Activated CD4-positive, alpha-beta memory T cell treated with anti-CD3 and anti-CD28 coated beads, Interleukin-2, amount 10 ng/mL, durations not matched to agents 7 days and 5 days (primary cell): ENCODE measurements at regions of chr1 and their contacts with region 1.

Region 1: GRCh38 chr1:156728597-156729462 is at the start of gene ISG20L2:
- DNase-seq: peak; percentile 98
- H3K4me3 Mint-ChIP-seq: no peak within 1 kb of the TSS
- H3K27ac Mint-ChIP-seq: no peak within 1 kb of the TSS
- H3K4me1 Mint-ChIP-seq: peaks cover 24% of the 10 kb centered on the region
- H3K27me3 Mint-ChIP-seq: no peaks in the 10 kb centered on the region
- total RNA-seq, gene ISG20L2: 42.0 to 43.3 TPM

Region 2: DNA sequence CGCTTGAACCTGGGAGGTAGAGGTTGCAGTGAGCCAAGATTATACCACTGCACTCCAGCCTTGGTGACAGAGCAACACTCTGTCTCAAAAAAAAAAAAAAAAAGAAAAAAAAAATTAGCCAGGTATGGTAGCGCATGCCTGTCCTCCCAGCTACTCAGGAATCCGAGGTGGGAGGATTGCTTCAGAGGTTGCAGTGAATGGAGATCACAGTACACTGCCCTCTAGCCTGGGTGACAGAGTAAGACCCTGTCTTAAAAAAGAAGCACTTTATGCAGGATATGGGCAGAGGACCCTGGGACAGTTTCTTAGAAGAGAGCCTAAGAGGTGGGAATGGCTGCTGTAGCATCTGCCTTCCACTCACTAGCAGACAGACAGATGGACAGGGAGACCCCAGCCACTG is 179.4 kb before region 1 on chr1:
- CTCF ChIA-PET with region 1: no interaction called
- POLR2A ChIA-PET with region 1: no interaction called
- DNase-seq: no peak
- H3K4me3 Mint-ChIP-seq: no peak overlapping the region
- H3K27ac Mint-ChIP-seq: no peak overlapping the region
- H3K4me1 Mint-ChIP-seq: peaks cover 7% of the 10 kb centered on the region
- H3K27me3 Mint-ChIP-seq: no peaks in the 10 kb centered on the region

Region 3: DNA sequence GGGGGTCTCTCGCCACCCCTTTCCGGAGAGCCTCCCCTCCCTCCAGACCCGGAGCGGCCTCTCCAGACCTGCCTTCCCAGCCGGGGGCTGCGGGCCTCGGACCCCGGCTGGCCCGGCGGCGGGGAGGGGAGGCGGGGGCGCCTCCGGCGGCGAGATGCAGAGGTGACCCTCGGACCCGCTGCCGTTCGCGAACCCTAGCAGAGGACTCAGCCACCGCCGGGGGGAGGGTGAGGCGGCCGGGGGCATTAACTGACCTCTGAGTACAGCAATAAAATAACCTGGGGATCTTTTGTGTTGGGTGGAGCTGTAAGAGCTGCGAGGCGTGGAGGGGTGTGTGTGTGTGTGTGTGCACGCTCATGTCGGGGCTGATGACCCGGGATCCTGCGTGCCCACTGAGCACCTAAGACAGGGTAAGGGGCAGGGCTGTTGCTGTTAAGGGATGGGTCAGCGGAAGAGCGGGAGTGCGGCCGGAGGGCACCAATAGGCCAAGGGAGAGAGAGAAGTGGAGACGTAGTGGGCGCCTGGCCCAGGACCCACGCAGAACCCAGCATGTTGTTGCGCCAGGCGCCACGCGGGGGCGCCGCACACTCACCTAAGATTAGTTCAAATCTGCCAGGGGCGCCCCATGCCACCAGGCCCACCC is 103.3 kb before region 1 on chr1:
- CTCF ChIA-PET with region 1: interaction called, 14 read pairs
- POLR2A ChIA-PET with region 1: interaction called, 3 read pairs
- DNase-seq: peak; percentile 62
- H3K4me3 Mint-ChIP-seq: peak overlapping the region; percentile 35
- H3K27ac Mint-ChIP-seq: no peak overlapping the region
- H3K4me1 Mint-ChIP-seq: peaks cover 12% of the 10 kb centered on the region
- H3K27me3 Mint-ChIP-seq: peaks cover 64% of the 10 kb centered on the region

Region 4: DNA sequence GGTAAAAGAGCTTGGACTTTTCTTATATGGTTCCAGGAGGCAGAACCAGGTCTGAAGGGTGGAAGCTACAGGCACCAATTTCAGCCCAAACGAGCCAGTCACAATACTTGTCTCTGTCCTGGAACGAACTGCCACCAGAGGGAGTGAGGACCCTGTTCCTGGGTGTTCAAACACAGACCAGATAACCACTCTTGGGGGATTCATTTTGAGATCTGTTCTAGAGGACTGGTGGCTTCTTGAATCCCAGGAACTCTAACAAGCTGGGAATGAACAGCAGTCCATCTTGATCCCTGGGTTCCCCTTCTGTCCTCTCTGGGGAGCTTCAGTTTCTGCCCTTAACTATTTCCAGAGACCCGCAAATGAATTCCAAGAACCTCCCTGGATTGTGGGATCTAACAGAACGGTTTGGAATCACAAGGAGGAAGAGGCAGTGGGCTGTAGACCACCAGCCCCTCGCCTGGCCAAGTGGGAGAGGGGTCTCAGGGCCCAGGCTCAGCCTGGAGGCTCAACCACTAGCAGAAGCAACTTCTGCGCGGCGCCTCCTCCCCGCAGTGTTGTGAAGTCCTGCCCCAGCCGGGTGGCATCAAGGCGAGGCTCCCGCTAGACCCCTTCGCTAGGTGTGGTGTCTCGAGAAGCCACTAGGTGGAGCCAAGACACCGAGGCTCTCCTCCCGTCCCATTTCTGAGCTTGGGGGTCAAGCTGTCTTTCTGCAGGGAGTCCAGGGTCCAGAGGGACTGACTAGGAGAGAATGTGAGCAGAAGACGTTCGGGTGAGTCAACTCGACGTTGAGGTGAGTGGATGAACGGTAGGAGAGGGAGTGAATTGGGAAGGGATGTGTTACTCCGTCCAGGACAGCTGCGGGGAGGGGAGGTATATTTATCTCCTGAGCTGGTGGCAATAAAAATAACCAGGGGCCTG is 39.5 kb before region 1 on chr1:
- CTCF ChIA-PET with region 1: interaction called, 212 read pairs
- POLR2A ChIA-PET with region 1: interaction called, 32 read pairs
- DNase-seq: peak; percentile 76
- H3K4me3 Mint-ChIP-seq: no peak overlapping the region
- H3K27ac Mint-ChIP-seq: no peak overlapping the region
- H3K4me1 Mint-ChIP-seq: peaks cover 21% of the 10 kb centered on the region
- H3K27me3 Mint-ChIP-seq: peaks cover 65% of the 10 kb centered on the region

Region 5: GRCh38 chr1:156717275-156717805 is 11.5 kb before region 1 on chr1:
- CTCF ChIA-PET with region 1: interaction called, 33 read pairs
- POLR2A ChIA-PET with region 1: interaction called, 10 read pairs
- DNase-seq: no peak
- H3K4me3 Mint-ChIP-seq: no peak overlapping the region
- H3K27ac Mint-ChIP-seq: no peak overlapping the region
- H3K4me1 Mint-ChIP-seq: peaks cover 9% of the 10 kb centered on the region
- H3K27me3 Mint-ChIP-seq: no peaks in the 10 kb centered on the region

Region 6: GRCh38 chr1:156751758-156752757 is 23.2 kb after region 1 on chr1:
- CTCF ChIA-PET with region 1: interaction called, 69 read pairs
- POLR2A ChIA-PET with region 1: interaction called, 134 read pairs
- DNase-seq: peak; percentile 98
- H3K4me3 Mint-ChIP-seq: peak overlapping the region; percentile 96
- H3K27ac Mint-ChIP-seq: peak overlapping the region; percentile 89
- H3K4me1 Mint-ChIP-seq: peaks cover 40% of the 10 kb centered on the region
- H3K27me3 Mint-ChIP-seq: no peaks in the 10 kb centered on the region

Region 7: DNA sequence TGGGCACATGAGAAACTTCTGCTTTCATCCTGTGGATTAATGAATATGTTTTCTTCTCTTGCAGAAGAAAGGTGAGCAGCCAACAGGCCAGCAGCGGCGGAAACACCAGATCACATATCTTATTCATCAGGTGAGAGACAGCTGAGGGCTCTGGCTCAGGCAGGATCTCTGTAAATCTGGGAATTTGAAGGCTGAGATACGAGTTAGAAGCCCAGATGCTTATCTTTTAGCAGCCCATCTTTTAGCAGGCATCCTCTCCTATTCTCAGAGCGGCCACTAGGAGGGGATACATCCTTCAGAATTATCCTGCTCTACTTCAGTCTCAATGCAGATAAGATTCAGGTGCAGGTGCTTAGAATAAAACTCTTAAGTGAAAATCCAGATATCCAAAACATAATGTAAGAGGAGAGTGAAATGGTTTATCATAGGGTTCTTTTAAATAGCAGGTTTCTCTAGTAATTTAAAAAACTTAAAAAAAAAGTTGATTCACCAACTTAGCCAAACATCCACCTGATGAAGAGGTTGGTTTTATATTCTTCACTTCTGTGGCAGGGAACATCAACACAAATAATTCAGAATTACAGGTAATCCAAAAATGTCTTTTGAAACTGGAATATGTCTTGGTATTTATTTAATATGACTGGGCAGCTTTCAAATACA is 68.5 kb after region 1 on chr1:
- CTCF ChIA-PET with region 1: interaction called, 19 read pairs
- POLR2A ChIA-PET with region 1: interaction called, 15 read pairs
- DNase-seq: peak; percentile 70
- H3K4me3 Mint-ChIP-seq: no peak overlapping the region
- H3K27ac Mint-ChIP-seq: no peak overlapping the region
- H3K4me1 Mint-ChIP-seq: peaks cover 24% of the 10 kb centered on the region
- H3K27me3 Mint-ChIP-seq: no peaks in the 10 kb centered on the region

Region 8: DNA sequence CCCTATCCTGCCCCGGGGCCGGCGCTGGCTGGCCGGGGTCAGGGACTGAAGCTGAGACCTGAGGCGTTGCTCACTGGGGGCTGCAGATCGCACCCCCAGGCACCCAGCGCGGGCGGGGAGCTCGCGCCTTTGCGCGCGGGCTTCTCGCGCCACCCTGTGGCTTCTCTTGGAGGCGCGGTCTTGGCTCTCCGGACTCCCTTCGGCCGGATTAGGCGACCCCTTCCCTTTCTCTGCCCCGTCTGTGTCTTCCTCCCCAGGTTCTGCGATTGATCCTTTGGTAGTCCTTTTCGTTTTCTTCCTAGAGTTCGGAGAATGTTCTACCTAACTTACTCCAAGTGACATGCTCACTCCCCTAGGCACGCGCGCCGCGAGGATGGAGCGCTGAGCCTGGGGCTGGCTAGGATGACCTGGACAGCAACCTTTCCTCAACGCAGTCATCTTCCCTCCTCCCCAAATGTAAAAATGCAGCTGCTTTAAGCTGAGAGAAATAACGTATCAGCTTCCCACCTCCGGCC is 131.3 kb after region 1 on chr1:
- CTCF ChIA-PET with region 1: interaction called, 154 read pairs
- POLR2A ChIA-PET with region 1: interaction called, 40 read pairs
- DNase-seq: peak; percentile 64
- H3K4me3 Mint-ChIP-seq: peak overlapping the region; percentile 74
- H3K27ac Mint-ChIP-seq: no peak overlapping the region
- H3K4me1 Mint-ChIP-seq: peaks cover 52% of the 10 kb centered on the region
- H3K27me3 Mint-ChIP-seq: peaks cover 72% of the 10 kb centered on the region